Heart right ventricle (tissue), 16 donors: ENCODE measurements at regions of chr1 and their contacts with region 1.

Region 1: DNA sequence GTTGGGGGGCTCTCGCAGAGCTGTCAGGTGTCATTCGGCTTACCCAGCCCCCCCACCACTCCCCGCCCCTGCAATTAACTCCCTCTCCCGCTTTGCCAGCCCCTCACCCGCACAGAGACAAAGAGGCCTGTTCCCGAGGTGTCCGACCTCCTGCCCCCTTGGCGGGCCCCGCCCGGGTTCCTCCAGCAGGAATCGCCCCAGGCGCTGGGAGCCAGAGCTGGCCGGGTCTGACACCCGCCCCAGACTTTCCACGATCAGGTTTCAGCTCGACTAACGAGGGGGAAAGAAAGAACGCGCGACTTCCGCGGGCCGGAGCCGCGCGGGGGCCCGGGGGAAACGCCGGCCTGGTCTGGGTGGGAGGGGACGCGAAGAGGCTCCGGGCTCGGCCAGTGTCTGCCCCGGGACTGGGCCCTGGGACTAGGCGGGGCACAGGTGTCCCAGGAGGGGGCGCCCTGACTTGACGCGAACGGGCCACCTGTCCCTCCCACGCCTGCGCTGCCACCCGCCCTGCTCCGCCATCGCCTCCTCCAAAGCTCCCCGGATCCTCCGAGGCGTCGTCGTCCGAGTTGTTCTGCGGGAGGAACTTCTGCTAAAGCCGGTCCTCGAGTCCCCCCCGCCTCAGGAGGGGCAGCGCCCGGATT is 36.4 kb upstream of the HHAT start:
- DNase-seq: peak; percentile 62 to 69
- ATAC-seq: peak; percentile 44 to 85 (median 78)
- H3K4me3 ChIP-seq: peak overlapping the region; percentile 40 to 61 (median 52)
- H3K27ac ChIP-seq: peak overlapping the region; percentile 39 to 89 (median 80)
- H3K4me1 ChIP-seq: peaks cover 3 to 50% (median 25%) of the 10 kb centered on the region in 9 donors
- H3K27me3 ChIP-seq: peaks cover 0 to 32% (median 0%) of the 10 kb centered on the region in 7 donors
- CTCF ChIP-seq: peak in 7 of 9 donors; percentile 25 to 60 (median 43)

Region 2: DNA sequence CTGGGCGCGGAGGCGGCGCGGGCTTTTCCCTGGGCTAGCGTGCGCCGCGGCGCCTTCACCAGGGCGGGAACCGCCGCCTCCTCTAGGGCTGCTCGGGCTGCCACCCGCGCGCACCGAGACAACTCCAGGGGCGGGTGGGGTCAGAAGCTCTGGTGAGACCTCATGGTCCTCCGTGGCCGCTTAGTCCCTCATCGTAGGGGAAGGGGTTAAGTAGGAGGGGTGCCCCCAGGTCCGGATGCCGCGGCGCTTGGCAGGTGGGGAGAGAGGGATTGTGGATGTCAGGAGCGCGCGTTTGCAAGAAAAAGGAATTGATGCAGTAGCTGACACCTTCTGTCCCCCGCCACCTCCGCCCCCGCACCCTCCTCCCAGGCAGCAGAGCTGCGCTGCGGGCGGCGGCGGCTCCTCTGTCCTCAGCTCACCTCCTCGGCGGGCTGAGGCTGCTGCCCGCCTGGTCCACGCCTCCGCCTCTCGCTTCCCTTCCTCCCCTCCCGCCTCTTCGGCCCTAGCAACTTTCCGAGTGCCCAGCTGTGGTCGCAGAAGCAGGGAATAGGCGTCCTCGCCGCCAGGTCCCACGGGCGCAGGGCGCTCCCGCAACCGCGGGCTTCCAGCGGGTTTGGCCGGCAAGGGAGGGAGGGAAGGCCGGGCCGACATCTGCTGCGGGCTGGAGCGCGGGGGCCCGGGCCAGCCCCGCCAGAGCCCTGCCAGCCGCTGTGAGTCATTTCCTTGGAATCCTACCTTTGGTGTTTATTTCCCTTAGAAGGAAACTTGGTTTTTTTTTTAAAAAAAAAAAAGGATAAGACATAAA is 58.9 kb before region 1 on chr1:
- intact Hi-C with region 1: loop called in 6 of 10 experiments (anchors 5 to 10 kb)
- DNase-seq: peak in 1 of 2 donors; percentile 52
- ATAC-seq: peak; percentile 25 to 63 (median 47)
- H3K4me3 ChIP-seq: peak overlapping the region; percentile 38 to 82 (median 66)
- H3K27ac ChIP-seq: peak overlapping the region; percentile 42 to 96 (median 88)
- H3K4me1 ChIP-seq: peaks cover 0 to 48% (median 36%) of the 10 kb centered on the region in 9 donors
- H3K27me3 ChIP-seq: peaks cover 0 to 86% (median 5%) of the 10 kb centered on the region in 7 donors
- CTCF ChIP-seq: no peak

Region 3: GRCh38 chr1:210239349-210240111 is 52.8 kb before region 1 on chr1:
- intact Hi-C with region 1: loop called in 6 of 10 experiments (anchors 5 to 10 kb)
- DNase-seq: no peak
- ATAC-seq: peak in 1 of 8 donors; percentile 41
- H3K4me3 ChIP-seq: peak overlapping the region in 2 of 10 donors; percentile 2 to 14
- H3K27ac ChIP-seq: peak overlapping the region in 4 of 10 donors; percentile 6 to 96 (median 24)
- H3K4me1 ChIP-seq: peaks cover 0 to 40% (median 26%) of the 10 kb centered on the region in 9 donors
- H3K27me3 ChIP-seq: peaks cover 0 to 39% (median 0%) of the 10 kb centered on the region in 7 donors
- CTCF ChIP-seq: peak in 7 of 9 donors; percentile 23 to 51 (median 46)

Region 4: DNA sequence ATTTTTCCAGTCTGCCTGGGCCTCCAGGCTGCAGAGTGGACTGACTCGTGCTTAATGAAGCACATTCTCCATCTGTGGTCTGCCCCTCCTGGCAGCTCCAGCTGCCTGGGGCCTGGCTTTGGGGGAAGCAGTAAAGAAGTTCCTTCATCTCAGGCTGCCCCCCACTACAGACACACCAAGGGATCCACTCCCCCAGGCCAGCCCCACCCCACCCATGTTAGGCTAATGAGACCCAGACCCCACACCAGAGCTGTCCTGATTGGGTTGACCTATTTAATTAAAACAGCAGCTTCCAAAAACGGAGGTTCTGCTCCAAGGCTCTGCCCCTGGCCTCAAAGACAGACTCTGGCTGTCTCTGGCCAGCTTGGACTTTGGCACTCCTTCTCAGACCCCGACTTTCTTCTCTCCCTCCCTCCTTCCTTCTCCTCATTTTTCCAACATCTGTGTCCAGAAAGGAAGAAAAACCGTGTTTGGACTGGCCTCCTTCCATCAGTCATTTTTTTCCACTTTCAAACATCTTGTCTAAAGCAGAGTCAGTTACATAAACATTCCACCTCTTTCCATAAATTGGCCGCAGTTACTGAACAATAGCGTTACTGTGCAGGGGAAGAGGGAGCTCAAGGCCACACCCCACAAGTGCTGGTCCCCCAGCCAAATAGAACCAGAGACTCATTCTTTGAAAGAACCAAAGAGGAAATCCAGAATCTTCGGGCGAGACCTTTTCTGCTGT is 30.0 kb before region 1 on chr1:
- intact Hi-C with region 1: loop called in 1 of 10 experiments (anchors 2 kb)
- DNase-seq: peak; percentile 27 to 67
- ATAC-seq: peak; percentile 66 to 88 (median 84)
- H3K4me3 ChIP-seq: peak overlapping the region in 1 of 10 donors; percentile 6
- H3K27ac ChIP-seq: peak overlapping the region in 9 of 10 donors; percentile 13 to 86 (median 72)
- H3K4me1 ChIP-seq: peaks cover 0 to 52% (median 26%) of the 10 kb centered on the region in 9 donors
- H3K27me3 ChIP-seq: peaks cover 0 to 10% (median 3%) of the 10 kb centered on the region in 7 donors
- CTCF ChIP-seq: no peak

Region 5: GRCh38 chr1:210328746-210329503 is 36.6 kb after region 1 on chr1 and contains the start of gene HHAT:
- intact Hi-C with region 1: no loop called
- DNase-seq: peak; percentile 87 to 89
- ATAC-seq: peak; percentile 94 to 97 (median 95)
- H3K4me3 ChIP-seq: peak within 1 kb of the TSS; percentile 53 to 88 (median 72)
- H3K27ac ChIP-seq: peak within 1 kb of the TSS; percentile 84 to 98 (median 95)
- H3K4me1 ChIP-seq: peaks cover 5 to 32% (median 14%) of the 10 kb centered on the region in 9 donors
- H3K27me3 ChIP-seq: no peaks in the 10 kb centered on the region
- CTCF ChIP-seq: peak in 6 of 9 donors; percentile 5 to 47 (median 20)
- total RNA-seq, gene HHAT: 0.95 to 4.3 (median 2.6) TPM